Caco-2 (cell line): ENCODE measurements at regions of chr2 and their contacts with region 1.

Region 1: DNA sequence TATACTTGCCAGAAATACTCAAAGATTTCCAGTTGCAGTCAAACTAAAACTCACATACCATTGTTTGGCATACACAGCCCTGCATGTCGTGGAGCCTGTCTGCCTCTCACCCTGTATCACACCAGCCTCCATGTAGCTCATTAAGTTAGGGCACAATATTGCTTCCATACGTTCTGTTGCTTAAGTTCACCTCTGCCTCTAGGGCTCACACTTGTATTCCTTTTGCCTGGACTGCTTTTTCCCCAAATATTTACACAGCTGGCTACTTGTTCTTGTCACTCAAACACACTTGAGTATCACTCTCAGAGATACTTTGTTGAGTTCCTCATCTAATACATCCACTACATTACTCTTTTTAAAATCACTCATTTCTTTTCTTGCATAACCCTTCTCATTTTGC is 83.1 kb downstream of the PTH2R start:
- DNase-seq: peak in 1 of 2 experiments; percentile 49
- H3K4me3 ChIP-seq: no peak overlapping the region
- H3K4me3 Mint-ChIP-seq: peak overlapping the region; percentile 22
- H3K27ac Mint-ChIP-seq: peak overlapping the region; percentile 16
- H3K4me1 ChIP-seq: peaks cover 32% of the 10 kb centered on the region
- H3K4me1 Mint-ChIP-seq: peaks cover 36% of the 10 kb centered on the region
- H3K27me3 ChIP-seq: no peaks in the 10 kb centered on the region
- H3K27me3 Mint-ChIP-seq: no peaks in the 10 kb centered on the region
- CTCF ChIP-seq: peak in 1 of 2 experiments; percentile 34

Region 2: GRCh38 chr2:208718828-208719227 is 229.1 kb after region 1 on chr2:
- CTCF ChIA-PET with region 1: no interaction called
- POLR2A ChIA-PET with region 1: no interaction called
- intact Hi-C with region 1: loop called (anchors 5 kb)
- DNase-seq: no peak
- H3K4me3 ChIP-seq: no peak overlapping the region
- H3K4me3 Mint-ChIP-seq: no peak overlapping the region
- H3K27ac Mint-ChIP-seq: no peak overlapping the region
- H3K4me1 ChIP-seq: no peaks in the 10 kb centered on the region
- H3K4me1 Mint-ChIP-seq: peaks cover 7% of the 10 kb centered on the region
- H3K27me3 ChIP-seq: no peaks in the 10 kb centered on the region
- H3K27me3 Mint-ChIP-seq: no peaks in the 10 kb centered on the region
- CTCF ChIP-seq: no peak